ENCODE measurements at regions of chr2 and their contacts with region 1.

Region 1: DNA sequence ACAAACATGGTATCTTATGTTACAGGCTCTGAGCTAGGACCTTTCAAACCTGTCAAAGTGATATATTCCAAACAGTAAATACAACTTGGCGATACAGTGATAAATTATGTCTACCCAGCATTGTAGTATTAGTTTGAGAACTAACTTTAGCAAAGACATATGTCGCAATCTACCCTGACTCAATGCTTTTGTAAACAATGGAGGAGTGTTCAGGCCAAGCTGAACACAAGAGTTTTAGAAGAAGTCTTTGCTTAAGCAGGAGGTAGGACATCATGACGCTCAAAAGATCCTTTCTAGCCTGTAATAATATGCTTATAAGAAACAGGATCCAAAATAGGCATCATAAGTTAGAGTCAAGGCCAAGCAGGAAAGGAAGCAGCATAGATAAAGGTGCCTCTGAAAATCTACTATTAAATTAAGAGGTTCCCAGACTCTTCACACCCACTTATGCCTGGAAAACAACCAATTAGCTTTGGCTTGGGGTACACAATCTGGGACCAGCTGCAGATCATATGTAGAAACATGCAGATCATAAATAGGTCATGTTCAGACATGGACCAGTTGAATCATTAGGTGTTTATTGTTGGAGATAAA is 132.5 kb downstream of the CSRNP3 start:
- DNase-seq: peak; percentile 92
- H3K4me3 ChIP-seq: peak overlapping the region; percentile 1
- H3K27ac ChIP-seq: peak overlapping the region; percentile 75
- H3K4me1 ChIP-seq: peaks cover 57% of the 10 kb centered on the region
- H3K27me3 ChIP-seq: no peaks in the 10 kb centered on the region
- CTCF ChIP-seq: no peak

Region 2: DNA sequence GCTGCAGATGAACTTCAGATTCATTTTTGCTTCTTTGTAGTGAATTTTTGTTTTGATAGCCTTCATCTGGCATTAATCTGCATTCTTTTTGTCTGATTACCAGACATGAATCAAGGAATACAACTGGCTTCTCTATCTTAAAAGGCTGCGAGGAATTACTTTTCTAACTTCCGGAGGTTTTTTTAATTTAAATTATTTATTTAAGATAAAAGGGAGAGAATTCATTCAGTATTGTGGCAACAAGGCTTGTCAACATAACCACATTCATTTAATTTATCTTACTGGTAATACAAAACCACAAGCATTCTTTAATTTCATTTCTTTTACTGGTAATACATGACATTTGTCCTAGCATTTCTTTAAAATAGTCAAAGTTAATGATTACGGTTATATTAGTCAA is 96.5 kb before region 1 on chr2:
- CTCF ChIA-PET with region 1: no interaction called
- POLR2A ChIA-PET with region 1: no interaction called
- intact Hi-C with region 1: no loop called
- DNase-seq: no peak
- H3K4me3 ChIP-seq: no peak overlapping the region
- H3K27ac ChIP-seq: no peak overlapping the region
- H3K4me1 ChIP-seq: no peaks in the 10 kb centered on the region
- H3K27me3 ChIP-seq: no peaks in the 10 kb centered on the region
- CTCF ChIP-seq: no peak

Region 3: DNA sequence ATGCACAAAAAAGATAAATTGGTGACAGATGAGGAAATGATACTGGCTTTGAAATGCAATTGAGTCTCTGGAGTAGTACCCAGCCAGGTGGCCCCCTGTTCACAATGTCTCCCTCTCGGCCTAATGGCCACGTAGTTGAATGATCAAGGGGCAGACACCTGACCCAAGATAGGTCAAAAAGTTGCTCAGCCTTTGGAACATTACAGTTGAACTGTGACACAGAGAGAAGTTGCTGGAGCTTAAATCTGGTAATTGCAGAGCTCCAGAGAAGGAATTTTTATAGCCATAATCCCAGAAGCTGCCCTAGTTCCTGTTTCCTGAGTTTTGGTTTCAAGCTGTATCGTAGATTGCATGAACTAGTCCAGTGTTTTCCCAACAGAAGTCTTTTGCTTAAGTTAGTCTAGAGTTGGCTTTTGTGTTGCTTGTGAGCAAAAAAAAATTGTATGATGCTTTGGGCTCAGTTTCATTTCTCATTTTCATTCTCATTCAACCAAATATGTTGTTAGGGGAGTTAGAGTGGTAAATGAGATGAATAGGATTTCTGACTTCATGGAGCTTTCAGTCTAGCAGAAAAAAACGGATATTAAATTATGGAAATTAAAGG is 14.6 kb before region 1 on chr2:
- CTCF ChIA-PET with region 1: no interaction called
- POLR2A ChIA-PET with region 1: no interaction called
- intact Hi-C with region 1: loop called (anchors 1 kb)
- DNase-seq: peak; percentile 86
- H3K4me3 ChIP-seq: peak overlapping the region; percentile 6
- H3K27ac ChIP-seq: peak overlapping the region; percentile 80
- H3K4me1 ChIP-seq: peaks cover 66% of the 10 kb centered on the region
- H3K27me3 ChIP-seq: no peaks in the 10 kb centered on the region
- CTCF ChIP-seq: no peak

Region 4: DNA sequence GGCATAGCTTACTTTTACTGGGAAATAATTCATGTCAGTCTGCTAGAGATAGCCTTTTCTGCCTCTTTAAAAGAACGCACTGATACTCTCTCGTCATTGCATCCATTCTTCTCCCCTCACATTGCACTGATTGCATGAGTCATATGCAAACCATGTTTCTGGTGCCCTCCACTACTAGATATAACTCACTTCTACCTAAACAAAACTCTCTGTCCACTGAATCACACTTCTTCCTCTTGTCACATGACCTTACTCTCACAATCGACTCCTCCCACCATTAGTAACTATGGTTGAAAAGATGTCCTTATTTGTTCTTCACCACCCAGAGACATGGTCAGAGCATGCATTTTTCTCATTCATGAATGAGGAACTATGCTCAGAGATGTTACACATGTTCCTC is 25.4 kb after region 1 on chr2:
- CTCF ChIA-PET with region 1: no interaction called
- POLR2A ChIA-PET with region 1: no interaction called
- intact Hi-C with region 1: no loop called
- DNase-seq: peak; percentile 48
- H3K4me3 ChIP-seq: no peak overlapping the region
- H3K27ac ChIP-seq: no peak overlapping the region
- H3K4me1 ChIP-seq: peaks cover 62% of the 10 kb centered on the region
- H3K27me3 ChIP-seq: no peaks in the 10 kb centered on the region
- CTCF ChIP-seq: no peak

Region 5: DNA sequence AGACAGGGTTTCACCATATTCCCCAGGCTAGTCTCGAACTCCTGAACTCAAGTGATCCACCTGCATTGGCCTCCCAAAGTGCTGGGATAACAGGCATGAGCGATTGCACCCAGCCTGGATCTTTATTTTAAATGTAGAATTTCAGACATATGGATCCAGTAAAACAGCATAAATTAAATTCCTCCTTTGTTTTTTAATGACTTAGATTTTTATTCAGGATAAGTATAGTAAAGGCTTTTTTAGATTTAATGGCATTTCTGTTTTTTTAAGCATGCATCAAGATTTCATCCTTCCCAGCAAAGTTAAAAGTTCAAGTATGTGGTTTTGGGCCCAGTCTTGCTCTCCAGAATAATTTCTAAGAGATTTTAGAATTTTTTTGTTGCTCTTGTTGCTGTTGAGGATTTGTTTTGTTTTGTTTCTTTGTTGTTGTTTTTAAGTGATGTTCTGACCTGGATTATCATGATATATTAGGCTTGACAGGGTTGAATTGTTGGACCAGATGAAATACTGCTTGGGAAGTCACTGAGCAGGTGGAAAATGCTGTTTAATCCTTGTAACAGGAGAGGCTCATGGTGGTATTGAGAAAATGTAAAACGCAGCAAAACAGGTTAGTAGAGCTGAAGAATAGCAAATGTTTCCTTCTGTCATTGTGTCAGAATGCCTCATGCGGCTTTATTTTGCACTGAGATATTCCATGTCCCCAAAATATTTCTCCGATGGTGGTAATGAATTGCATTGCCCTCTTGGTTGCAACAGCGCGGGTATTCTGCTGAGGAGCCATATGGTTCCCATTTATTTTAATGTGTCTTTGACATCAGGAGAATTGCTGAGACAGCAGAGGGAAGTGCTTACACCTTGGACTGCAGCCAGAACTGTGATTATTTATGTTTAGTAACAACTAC is 44.2 kb after region 1 on chr2:
- CTCF ChIA-PET with region 1: no interaction called
- POLR2A ChIA-PET with region 1: no interaction called
- intact Hi-C with region 1: loop called (anchors 5 kb)
- DNase-seq: peak; percentile 97
- H3K4me3 ChIP-seq: peak overlapping the region; percentile 4
- H3K27ac ChIP-seq: peak overlapping the region; percentile 77
- H3K4me1 ChIP-seq: peaks cover 55% of the 10 kb centered on the region
- H3K27me3 ChIP-seq: no peaks in the 10 kb centered on the region
- CTCF ChIP-seq: no peak

Region 6: GRCh38 chr2:166539340-166540162 is 937.5 kb after region 1 on chr2:
- CTCF ChIA-PET with region 1: no interaction called
- POLR2A ChIA-PET with region 1: no interaction called
- intact Hi-C with region 1: no loop called
- DNase-seq: peak; percentile 84
- H3K4me3 ChIP-seq: no peak overlapping the region
- H3K27ac ChIP-seq: no peak overlapping the region
- H3K4me1 ChIP-seq: no peaks in the 10 kb centered on the region
- H3K27me3 ChIP-seq: no peaks in the 10 kb centered on the region
- CTCF ChIP-seq: peak; percentile 86

Measured in A673 (cell line).